Gastrocnemius medialis (tissue), 4 donors: ENCODE measurements at regions of chr11 and their contacts with region 1.

Region 1: DNA sequence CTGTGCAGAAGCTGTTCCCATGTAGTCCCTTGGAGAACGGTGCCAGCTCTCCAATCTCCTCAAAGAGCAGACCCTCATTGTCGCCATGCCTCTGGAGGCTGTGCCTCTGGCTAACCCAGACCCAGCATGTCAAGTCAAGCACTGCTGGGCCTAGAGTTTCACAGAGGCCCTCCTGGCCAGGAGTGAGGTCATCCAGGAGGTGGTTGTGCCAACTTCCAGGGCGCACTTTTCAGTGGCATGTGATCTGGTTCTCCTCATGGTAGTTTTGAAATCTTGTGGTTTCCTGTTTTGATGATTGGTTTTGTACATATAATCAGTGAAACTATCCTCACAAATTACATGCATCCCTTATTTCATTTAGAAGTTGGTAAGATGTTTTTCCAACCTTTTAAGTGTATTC is 78.9 kb downstream of the PPFIBP2 start:
- DNase-seq: peak; percentile 81 to 87
- ATAC-seq: peak; percentile 94 to 95
- H3K4me3 ChIP-seq: no peak overlapping the region
- H3K27ac ChIP-seq: peak overlapping the region; percentile 68 to 82 (median 75)
- H3K4me1 ChIP-seq: peaks cover 77 to 79% of the 10 kb centered on the region in 2 donors
- H3K27me3 ChIP-seq: no peaks in the 10 kb centered on the region
- CTCF ChIP-seq: no peak
- POLR2A ChIP-seq: no peak

Region 2: DNA sequence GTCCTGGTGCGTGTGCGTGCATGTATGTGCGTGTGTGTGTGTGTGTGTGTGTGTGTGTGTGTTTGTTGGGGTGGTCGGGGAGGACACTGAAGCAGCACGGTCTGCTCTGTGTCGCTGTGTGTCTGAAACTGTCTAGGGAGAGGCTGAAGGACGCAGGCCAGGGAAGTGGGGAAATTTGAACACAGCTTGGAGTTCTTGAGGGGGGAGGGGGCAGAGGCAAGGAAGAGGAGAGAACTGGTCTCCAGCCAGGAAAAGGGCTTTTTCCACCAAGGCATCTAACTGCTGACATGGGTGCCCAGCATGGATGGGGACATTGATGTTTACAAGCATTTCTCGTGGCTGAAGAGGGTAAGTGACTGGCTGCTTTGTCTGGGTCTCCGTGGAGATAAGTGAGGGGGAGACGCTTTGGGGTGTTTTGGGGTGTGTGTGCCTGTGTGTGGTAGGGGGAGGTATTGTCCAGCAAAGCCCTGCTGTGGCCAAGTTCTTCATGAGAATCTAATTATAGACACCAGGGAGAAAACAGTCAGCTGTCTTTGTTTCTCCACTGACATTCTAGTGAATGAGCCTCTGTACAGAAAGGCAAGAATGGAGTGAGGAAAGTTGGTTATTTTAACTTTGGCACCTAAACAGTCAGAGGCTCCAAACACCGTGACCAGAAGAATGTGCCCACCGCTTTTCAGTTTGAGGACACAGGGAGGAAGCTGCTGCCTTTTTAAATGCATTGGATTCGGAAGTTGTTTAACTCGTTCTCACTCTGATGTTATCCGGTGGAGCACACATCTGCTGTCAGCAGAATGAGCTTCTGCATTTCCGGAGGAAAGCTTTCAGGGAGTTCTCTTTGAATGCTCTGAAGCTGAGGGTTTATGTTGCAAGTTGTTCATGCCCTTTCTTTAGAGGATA is 15.2 kb before region 1 on chr11:
- in situ Hi-C with region 1: no loop called
- intact Hi-C with region 1: loop called (anchors 2 kb)
- DNase-seq: peak; percentile 87 to 88
- ATAC-seq: peak; percentile 72 to 75
- H3K4me3 ChIP-seq: peak overlapping the region; percentile 44 to 56 (median 50)
- H3K27ac ChIP-seq: peak overlapping the region; percentile 89 to 96 (median 94)
- H3K4me1 ChIP-seq: peaks cover 83 to 91% of the 10 kb centered on the region in 2 donors
- H3K27me3 ChIP-seq: no peaks in the 10 kb centered on the region
- CTCF ChIP-seq: peak in 1 of 5 experiments; percentile 15
- POLR2A ChIP-seq: peak; percentile 45 to 60

Region 3: GRCh38 chr11:7665473-7666291 is 73.0 kb after region 1 on chr11:
- in situ Hi-C with region 1: no loop called
- intact Hi-C with region 1: no loop called
- DNase-seq: peak; percentile 35 to 77
- ATAC-seq: peak; percentile 88 to 95
- H3K4me3 ChIP-seq: no peak overlapping the region
- H3K27ac ChIP-seq: no peak overlapping the region
- H3K4me1 ChIP-seq: no peaks in the 10 kb centered on the region
- H3K27me3 ChIP-seq: no peaks in the 10 kb centered on the region
- CTCF ChIP-seq: peak; percentile 73 to 92 (median 89)
- POLR2A ChIP-seq: no peak

Region 4: GRCh38 chr11:7677071-7677470 is 84.4 kb after region 1 on chr11:
- in situ Hi-C with region 1: no loop called
- intact Hi-C with region 1: no loop called
- DNase-seq: no peak
- ATAC-seq: no peak
- H3K4me3 ChIP-seq: no peak overlapping the region
- H3K27ac ChIP-seq: no peak overlapping the region
- H3K4me1 ChIP-seq: peaks cover 0 to 19% of the 10 kb centered on the region in 2 donors
- H3K27me3 ChIP-seq: no peaks in the 10 kb centered on the region
- CTCF ChIP-seq: no peak
- POLR2A ChIP-seq: no peak